Mammary epithelial cell (primary cell): ENCODE measurements at regions of chr13 and their contacts with region 1.

Region 1: DNA sequence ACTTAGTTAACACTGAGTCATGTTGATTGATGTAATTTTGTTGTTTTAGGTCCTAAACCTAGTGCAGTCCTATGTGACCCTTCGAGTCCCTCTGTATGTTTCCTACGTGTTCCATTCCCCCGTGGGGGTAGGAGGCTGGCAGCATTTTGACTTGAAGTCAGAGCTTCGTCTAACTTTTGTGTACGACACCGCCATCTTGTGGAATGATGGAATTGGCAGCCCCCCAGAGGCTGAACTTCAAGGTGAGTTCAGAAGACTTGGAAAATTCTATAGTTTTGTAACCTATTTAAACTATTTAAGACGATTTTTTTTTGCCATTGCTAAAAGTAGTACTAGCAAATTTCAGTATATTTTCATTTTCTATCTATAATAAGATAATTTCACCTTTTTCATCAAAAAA is 117.9 kb downstream of the STOML3 start:
- DNase-seq: peak; percentile 28
- H3K4me3 ChIP-seq: no peak overlapping the region
- H3K27ac ChIP-seq: no peak overlapping the region
- H3K4me1 ChIP-seq: no peaks in the 10 kb centered on the region
- H3K27me3 ChIP-seq: no peaks in the 10 kb centered on the region
- CTCF ChIP-seq: peak; percentile 79 to 81

Region 2: DNA sequence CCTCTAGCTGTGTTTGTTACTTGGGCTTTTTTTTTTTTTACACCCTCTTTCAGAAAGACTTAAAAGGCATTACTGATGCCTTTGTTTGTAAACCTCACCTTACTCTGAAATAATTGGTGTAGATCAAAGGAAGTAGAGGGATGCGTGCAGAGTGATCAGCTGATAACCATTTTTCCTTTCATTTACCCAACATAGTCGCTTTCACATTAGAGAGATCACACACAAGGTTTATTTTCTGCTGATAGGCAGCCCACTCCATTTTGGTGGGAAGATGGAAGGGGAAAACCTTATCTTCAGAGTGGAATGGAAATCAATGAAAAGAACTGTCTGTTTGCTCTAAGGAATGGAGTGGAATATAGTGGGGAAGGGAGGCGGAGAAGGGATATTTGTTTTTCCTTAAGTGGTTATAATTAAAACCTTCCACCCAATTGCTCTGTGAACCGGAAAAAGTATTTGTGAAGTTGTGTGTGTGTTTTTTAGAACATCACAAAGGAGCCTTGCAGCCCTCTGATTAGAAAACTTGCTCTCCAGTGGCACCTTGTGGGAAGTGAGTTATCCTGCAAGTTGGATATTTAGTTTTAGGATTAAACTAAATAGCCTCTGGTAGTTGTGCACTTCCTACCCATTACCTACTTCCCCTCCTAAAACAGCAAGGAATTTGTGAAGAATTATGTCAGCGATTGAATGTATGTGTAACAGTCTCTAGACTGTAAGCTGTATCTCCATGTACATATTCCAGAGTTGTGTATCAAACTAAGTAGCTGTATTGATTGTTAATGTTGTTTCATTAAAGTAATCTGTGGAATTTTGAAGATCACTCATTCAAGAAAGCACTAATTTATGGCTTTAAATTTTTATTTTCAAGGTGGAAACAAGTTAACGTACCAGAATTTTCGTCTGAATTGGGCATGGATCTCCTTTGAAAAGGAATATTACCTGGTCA is 109.0 kb before region 1 on chr13:
- CTCF ChIA-PET with region 1: no interaction called
- dilution Hi-C with region 1: no loop called
- in situ Hi-C with region 1: no loop called
- intact Hi-C with region 1: loop called (anchors 5 kb)
- DNase-seq: peak; percentile 23
- H3K4me3 ChIP-seq: no peak overlapping the region
- H3K27ac ChIP-seq: no peak overlapping the region
- H3K4me1 ChIP-seq: peaks cover 10% of the 10 kb centered on the region
- H3K27me3 ChIP-seq: no peaks in the 10 kb centered on the region
- CTCF ChIP-seq: peak; percentile 75 to 83